Activated B cell treated with CpG ODN at 0.5 μM for 24 hours (primary cell): ENCODE measurements at regions of chr9 and their contacts with region 1.

Region 1: DNA sequence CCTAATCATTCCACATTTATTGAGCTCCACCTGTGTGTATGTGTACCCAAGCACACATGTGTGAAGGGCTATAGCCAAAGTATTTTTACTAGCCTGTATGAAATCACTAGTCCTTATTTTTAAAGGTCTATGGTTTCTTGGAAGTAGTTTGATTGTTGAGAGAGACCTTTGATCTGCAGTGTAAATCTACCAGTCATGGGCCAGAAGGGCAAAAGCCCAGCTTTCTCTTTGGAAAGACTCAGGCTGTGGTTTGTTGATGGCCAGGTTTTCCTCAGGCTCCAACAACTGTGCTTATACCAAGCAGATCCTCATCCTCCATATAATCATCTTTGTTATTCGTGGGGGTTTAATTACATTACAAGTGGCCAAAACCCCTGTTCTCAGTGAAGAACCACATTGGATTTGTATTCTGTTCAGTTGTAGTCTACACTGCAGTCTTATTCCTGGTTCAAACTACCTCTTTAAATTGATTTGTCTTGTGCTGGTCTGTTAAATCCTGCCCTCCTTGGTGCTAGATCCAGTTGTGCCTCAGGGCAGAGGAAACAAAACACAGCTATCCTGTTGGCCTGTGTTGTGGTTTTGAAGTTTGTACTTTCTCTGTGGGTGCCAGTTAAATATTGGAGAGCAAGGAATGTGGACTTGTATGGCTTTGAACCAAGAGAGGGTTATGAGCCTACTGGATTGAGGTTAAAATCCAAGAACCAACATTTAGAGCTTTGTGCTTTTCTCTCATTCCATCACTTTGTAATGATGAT is 13.3 kb downstream of the CDC26 start:
- DNase-seq: no peak
- ATAC-seq: no peak
- H3K4me3 Mint-ChIP-seq: no peak overlapping the region
- H3K27ac Mint-ChIP-seq: no peak overlapping the region
- H3K4me1 Mint-ChIP-seq: no peaks in the 10 kb centered on the region
- H3K27me3 Mint-ChIP-seq: no peaks in the 10 kb centered on the region
- CTCF ChIP-seq: no peak

Region 2: DNA sequence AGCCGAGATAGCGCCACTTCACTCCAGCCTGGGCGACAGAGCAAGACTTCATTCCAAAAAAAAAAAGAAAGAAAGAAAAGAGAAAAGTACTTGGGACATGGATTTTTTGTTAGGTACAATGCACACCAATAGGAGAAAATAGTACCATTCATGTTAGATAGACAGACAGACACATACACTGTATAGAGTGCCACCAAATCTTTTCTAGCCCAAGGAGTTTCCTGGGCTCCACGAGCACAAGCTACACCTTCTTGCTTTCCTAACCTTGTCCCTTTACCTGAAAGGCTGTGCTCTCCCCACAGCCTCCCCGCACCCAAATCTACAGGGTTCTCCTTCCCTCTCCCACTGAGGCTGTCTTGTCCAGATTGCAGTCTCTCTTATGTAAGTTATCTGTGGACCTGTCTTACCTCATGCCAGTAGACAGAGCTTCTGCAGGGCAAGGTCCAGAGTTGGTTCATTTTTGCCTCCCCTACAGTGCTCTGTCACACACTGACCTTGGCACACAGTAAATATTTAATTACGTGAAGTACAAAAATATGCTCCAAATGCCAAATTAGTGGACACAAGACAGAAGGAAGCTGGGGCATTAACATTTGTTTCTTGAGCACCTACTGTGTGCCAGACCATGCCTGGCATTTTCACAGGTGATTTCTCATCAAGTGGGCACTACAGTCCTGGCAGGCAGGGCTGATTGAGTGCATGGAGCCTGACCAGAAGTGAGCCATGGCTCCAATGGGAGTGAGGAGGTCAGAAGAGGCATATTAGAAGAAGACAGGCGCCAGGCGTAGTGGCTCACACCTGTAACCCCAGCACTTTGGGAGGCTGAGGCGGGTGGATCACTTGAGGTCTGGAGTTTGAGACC is 133.1 kb after region 1 on chr9:
- CTCF ChIA-PET with region 1: no interaction called
- POLR2A ChIA-PET with region 1: interaction called, 12 read pairs
- intact Hi-C with region 1: no loop called
- DNase-seq: no peak
- ATAC-seq: no peak
- H3K4me3 Mint-ChIP-seq: no peak overlapping the region
- H3K27ac Mint-ChIP-seq: no peak overlapping the region
- H3K4me1 Mint-ChIP-seq: peaks cover 5% of the 10 kb centered on the region
- H3K27me3 Mint-ChIP-seq: no peaks in the 10 kb centered on the region
- CTCF ChIP-seq: no peak